AG04450 (cell line): ENCODE measurements at regions of chr11 and their contacts with region 1.

Region 1: DNA sequence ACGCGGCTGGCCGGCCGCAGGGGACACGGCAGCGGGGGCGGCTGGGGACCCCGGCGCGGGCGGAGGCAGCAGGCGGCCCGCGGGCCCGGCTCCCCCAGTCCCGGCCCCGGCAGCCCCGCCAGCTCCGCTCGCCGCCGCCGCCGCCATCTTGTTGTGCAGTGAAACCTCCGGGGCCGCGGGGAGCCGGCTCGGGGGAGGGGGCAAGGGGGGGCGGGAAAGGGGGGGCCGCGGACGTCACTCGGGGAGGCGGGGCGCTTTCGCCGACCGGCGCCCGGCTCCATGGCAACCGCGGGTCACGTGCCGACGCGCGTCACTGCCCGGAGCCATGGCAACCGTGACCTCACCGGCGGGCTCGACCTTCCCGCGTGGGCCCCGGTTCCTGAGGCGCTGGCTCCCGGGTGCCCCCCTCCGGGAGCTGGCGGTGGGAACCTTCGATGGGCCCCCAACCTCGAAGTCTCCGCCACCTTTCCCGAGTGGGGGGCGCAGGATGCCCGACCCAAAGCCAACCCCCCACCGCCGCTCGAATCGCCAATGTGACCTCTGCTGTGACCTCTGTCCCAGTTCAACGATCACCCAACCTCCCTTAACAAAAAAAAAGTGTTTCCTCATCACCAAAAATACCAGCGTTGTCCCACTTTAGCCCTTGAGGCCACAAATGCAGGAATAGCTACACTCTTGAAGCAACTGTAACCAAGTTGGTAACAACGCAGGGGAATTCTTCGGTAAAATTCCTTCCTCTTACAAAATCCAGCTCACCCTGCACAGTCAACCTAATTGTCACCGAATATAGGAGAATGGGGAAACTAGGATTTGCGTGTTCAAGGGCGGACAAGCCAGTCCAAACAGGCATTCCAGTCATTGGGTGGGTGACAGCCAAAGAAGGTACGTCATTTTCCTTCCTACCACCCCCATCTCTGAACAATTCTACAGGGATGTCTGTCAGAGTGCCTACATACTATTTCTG is at the start of gene SIK3:
- DNase-seq: peak; percentile 83
- H3K4me3 ChIP-seq: peak within 1 kb of the TSS; percentile 78
- H3K27ac ChIP-seq: peak within 1 kb of the TSS; percentile 91
- H3K27me3 ChIP-seq: no peaks in the 10 kb centered on the region
- CTCF ChIP-seq: peak; percentile 67
- polyA plus RNA-seq, gene SIK3: 9.0 and 12.6 TPM in 2 replicates

Region 2: DNA sequence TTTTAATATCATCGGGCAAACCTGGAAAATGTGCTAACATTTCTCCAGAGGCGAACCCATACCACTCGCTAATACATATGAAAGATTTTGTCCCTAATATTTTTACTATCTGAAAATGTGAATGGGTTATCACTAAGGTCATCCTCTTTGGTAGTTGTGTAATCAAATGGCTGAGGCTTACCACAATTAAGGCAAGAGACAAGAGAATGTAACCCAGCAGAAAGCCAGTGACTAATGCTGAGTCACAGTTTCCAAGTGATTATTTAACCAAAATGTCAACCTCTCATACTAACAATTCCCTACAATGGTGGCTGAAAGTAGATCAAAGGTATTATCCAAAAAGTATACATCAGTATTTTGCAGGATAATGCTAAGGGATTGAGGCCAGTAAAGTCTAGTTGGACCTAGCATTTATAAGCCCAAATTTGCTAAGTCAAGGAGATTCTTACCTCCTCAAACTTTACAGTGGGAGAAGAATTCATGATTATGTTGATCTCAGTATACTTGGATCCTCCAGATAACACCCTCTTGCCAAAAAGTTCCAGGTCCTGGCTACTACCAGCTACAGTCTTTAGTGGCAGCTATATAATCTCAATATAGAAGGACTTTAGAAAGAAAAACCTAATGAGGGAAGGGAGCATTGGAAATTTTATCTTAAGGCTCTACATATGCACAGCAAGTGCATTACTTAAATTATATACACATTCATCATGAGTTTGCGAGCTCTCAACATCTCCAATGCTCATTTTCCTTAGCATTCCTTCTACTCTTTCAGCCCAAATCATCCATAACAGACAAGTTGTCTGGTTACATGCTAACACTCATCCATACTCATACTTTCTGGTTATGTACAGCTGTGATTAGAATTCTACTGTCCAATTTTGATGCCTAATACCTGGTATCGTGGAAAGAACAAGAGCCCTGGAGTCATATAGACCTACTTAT is 25.8 kb before region 1 on chr11:
- CTCF ChIA-PET with region 1: interaction called, 10 read pairs
- POLR2A ChIA-PET with region 1: no interaction called
- DNase-seq: peak; percentile 75
- H3K4me3 ChIP-seq: no peak overlapping the region
- H3K27ac ChIP-seq: no peak overlapping the region
- H3K27me3 ChIP-seq: no peaks in the 10 kb centered on the region
- CTCF ChIP-seq: no peak